Natural killer cell (primary cell): ENCODE measurements at regions of chr7 and their contacts with region 1.

Region 1: GRCh38 chr7:154913638-154914312 is 89.1 kb downstream of the PAXIP1 start:
- DNase-seq: peak; percentile 85 to 90
- ATAC-seq: peak; percentile 87 to 99 (median 98)
- H3K4me3 ChIP-seq: peak overlapping the region; percentile 3
- H3K4me3 Mint-ChIP-seq: peak overlapping the region; percentile 86
- H3K27ac ChIP-seq: no peak overlapping the region
- H3K27ac Mint-ChIP-seq: peak overlapping the region in 1 of 2 donors; percentile 71
- H3K4me1 ChIP-seq: peaks cover 13% of the 10 kb centered on the region
- H3K4me1 Mint-ChIP-seq: peaks cover 0 to 4% of the 10 kb centered on the region in 2 donors
- H3K27me3 ChIP-seq: peaks cover 5% of the 10 kb centered on the region
- H3K27me3 Mint-ChIP-seq: peaks cover 16 to 26% of the 10 kb centered on the region in 2 donors
- CTCF ChIP-seq: peak; percentile 93

Region 2: GRCh38 chr7:154953006-154953684 is 39.4 kb after region 1 on chr7:
- intact Hi-C with region 1: loop called (anchors 2 kb)
- DNase-seq: peak; percentile 39 to 83
- ATAC-seq: peak in 2 of 3 donors; percentile 50 to 61
- H3K4me3 ChIP-seq: no peak overlapping the region
- H3K4me3 Mint-ChIP-seq: no peak overlapping the region
- H3K27ac ChIP-seq: no peak overlapping the region
- H3K27ac Mint-ChIP-seq: no peak overlapping the region
- H3K4me1 ChIP-seq: no peaks in the 10 kb centered on the region
- H3K4me1 Mint-ChIP-seq: no peaks in the 10 kb centered on the region
- H3K27me3 ChIP-seq: no peaks in the 10 kb centered on the region
- H3K27me3 Mint-ChIP-seq: no peaks in the 10 kb centered on the region
- CTCF ChIP-seq: peak; percentile 62